ENCODE measurements at regions of chr3 and their contacts with region 1.

Region 1: GRCh38 chr3:184777336-184778004 is 34.5 kb upstream of the VPS8 start:
- DNase-seq: peak in 1 of 2 donors; percentile 95
- H3K4me3 ChIP-seq: no peak overlapping the region
- H3K27ac ChIP-seq: no peak overlapping the region
- H3K4me1 ChIP-seq: no peaks in the 10 kb centered on the region
- H3K27me3 ChIP-seq: no peaks in the 10 kb centered on the region
- CTCF ChIP-seq: peak; percentile 75 to 98 (median 97)
- POLR2A ChIP-seq: no peak

Region 2: GRCh38 chr3:184716622-184717398 is 60.7 kb before region 1 on chr3:
- intact Hi-C with region 1: loop called (anchors 5 kb)
- DNase-seq: peak; percentile 70 to 86
- H3K4me3 ChIP-seq: peak overlapping the region in 1 of 2 donors; percentile 9
- H3K27ac ChIP-seq: peak overlapping the region; percentile 53
- H3K4me1 ChIP-seq: peaks cover 17% of the 10 kb centered on the region
- H3K27me3 ChIP-seq: no peaks in the 10 kb centered on the region
- CTCF ChIP-seq: no peak
- POLR2A ChIP-seq: no peak